ENCODE measurements at regions of chr13 and their contacts with region 1.

Region 1: GRCh38 chr13:102460801-102461200 is 59.0 kb upstream of the FGF14 start:
- DNase-seq: no peak
- H3K4me3 ChIP-seq: no peak overlapping the region
- H3K27ac ChIP-seq: no peak overlapping the region
- H3K4me1 ChIP-seq: no peaks in the 10 kb centered on the region
- H3K27me3 ChIP-seq: no peaks in the 10 kb centered on the region
- CTCF ChIP-seq: no peak

Region 2: GRCh38 chr13:102128216-102128810 is 332.5 kb before region 1 on chr13:
- CTCF ChIA-PET with region 1: no interaction called
- dilution Hi-C with region 1: no loop called
- in situ Hi-C with region 1: no loop called
- intact Hi-C with region 1: loop called (anchors 5 kb)
- DNase-seq: peak; percentile 93
- H3K4me3 ChIP-seq: no peak overlapping the region
- H3K27ac ChIP-seq: peak overlapping the region; percentile 41
- H3K4me1 ChIP-seq: peaks cover 20% of the 10 kb centered on the region
- H3K27me3 ChIP-seq: no peaks in the 10 kb centered on the region
- CTCF ChIP-seq: no peak

Region 3: DNA sequence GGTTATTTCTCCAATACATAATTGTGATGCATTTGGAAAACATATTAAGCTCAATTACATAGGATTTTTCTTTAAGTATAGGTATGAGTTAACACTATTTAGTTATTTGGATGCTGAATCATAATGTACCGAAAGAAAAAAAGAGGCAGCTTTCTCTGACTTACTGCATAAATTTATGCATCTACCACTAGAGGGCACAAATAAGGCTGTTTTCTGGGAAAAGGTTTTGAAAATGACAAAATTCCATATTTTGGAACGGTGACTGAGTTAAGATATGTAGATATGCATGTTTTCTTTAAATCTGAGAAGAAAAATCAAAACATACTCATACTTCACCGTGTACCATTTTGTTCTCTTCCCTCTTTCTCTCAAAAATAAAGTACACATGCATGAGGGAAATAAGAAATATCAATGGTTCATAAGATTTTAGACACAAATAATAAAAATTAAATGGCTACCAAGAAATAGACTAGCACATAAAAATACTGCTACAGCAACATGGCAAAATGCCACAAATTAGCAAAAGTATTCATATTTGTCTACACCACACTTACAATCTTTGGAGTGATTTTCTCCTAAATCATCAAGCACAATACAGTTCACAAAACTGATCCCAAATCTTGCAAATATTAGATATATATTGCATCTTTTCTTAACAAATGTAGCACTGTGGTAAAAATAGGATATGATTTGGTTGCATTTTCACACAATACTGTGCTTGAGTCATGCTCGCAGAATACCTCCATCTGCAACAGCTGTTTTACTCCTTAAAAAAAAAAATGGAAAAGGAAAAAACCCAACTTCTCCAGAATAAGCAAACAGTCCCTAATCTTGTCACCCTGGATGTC is 319.0 kb before region 1 on chr13:
- CTCF ChIA-PET with region 1: interaction called, 6 read pairs
- dilution Hi-C with region 1: no loop called
- in situ Hi-C with region 1: no loop called
- intact Hi-C with region 1: loop called (anchors 1 kb)
- DNase-seq: no peak
- H3K4me3 ChIP-seq: no peak overlapping the region
- H3K27ac ChIP-seq: no peak overlapping the region
- H3K4me1 ChIP-seq: no peaks in the 10 kb centered on the region
- H3K27me3 ChIP-seq: no peaks in the 10 kb centered on the region
- CTCF ChIP-seq: peak; percentile 79 to 91

Region 4: GRCh38 chr13:102402290-102402689 is 58.5 kb before region 1 on chr13:
- CTCF ChIA-PET with region 1: no interaction called
- dilution Hi-C with region 1: no loop called
- in situ Hi-C with region 1: no loop called
- intact Hi-C with region 1: loop called (anchors 5 kb)
- DNase-seq: no peak
- H3K4me3 ChIP-seq: peak overlapping the region in 1 of 3 experiments; percentile 30
- H3K27ac ChIP-seq: no peak overlapping the region
- H3K4me1 ChIP-seq: peaks cover 14% of the 10 kb centered on the region
- H3K27me3 ChIP-seq: peaks cover 3% of the 10 kb centered on the region
- CTCF ChIP-seq: no peak

Region 5: GRCh38 chr13:102620516-102620915 is 159.7 kb after region 1 on chr13:
- CTCF ChIA-PET with region 1: no interaction called
- dilution Hi-C with region 1: no loop called
- in situ Hi-C with region 1: no loop called
- intact Hi-C with region 1: no loop called
- DNase-seq: no peak
- H3K4me3 ChIP-seq: no peak overlapping the region
- H3K27ac ChIP-seq: no peak overlapping the region
- H3K4me1 ChIP-seq: no peaks in the 10 kb centered on the region
- H3K27me3 ChIP-seq: no peaks in the 10 kb centered on the region
- CTCF ChIP-seq: no peak